ENCODE measurements at regions of chr6 and their contacts with region 1.

Region 1: DNA sequence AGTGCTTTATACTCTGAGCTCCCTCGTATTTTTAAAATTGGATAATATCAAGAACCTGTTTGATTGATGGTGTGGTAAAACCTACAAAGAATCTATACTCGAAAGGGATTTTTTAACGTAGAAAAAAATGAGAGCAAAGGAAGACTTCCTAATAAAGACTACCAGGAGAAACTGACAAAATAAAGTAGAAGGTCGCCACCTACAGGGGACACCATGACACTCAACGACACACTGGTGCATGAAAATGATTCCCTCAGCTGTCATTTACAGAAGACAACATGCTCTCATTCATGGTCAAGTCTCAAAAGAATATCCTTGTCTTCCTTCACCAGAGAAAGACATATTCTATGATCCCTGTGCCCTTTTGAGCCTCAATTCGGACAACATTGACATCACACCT is 10.1 kb upstream of the NHSL1 start:
- DNase-seq: peak; percentile 75
- ATAC-seq: peak; percentile 55
- H3K4me3 Mint-ChIP-seq: no peak overlapping the region
- H3K27ac Mint-ChIP-seq: no peak overlapping the region
- H3K4me1 Mint-ChIP-seq: no peaks in the 10 kb centered on the region
- H3K27me3 Mint-ChIP-seq: peaks cover 3% of the 10 kb centered on the region
- CTCF ChIP-seq: peak; percentile 63

Region 2: GRCh38 chr6:138250513-138251247 is 258.7 kb before region 1 on chr6:
- CTCF ChIA-PET with region 1: no interaction called
- POLR2A ChIA-PET with region 1: no interaction called
- intact Hi-C with region 1: no loop called
- DNase-seq: no peak
- ATAC-seq: no peak
- H3K4me3 Mint-ChIP-seq: no peak overlapping the region
- H3K27ac Mint-ChIP-seq: no peak overlapping the region
- H3K4me1 Mint-ChIP-seq: no peaks in the 10 kb centered on the region
- H3K27me3 Mint-ChIP-seq: peaks cover 6% of the 10 kb centered on the region
- CTCF ChIP-seq: no peak

Region 3: DNA sequence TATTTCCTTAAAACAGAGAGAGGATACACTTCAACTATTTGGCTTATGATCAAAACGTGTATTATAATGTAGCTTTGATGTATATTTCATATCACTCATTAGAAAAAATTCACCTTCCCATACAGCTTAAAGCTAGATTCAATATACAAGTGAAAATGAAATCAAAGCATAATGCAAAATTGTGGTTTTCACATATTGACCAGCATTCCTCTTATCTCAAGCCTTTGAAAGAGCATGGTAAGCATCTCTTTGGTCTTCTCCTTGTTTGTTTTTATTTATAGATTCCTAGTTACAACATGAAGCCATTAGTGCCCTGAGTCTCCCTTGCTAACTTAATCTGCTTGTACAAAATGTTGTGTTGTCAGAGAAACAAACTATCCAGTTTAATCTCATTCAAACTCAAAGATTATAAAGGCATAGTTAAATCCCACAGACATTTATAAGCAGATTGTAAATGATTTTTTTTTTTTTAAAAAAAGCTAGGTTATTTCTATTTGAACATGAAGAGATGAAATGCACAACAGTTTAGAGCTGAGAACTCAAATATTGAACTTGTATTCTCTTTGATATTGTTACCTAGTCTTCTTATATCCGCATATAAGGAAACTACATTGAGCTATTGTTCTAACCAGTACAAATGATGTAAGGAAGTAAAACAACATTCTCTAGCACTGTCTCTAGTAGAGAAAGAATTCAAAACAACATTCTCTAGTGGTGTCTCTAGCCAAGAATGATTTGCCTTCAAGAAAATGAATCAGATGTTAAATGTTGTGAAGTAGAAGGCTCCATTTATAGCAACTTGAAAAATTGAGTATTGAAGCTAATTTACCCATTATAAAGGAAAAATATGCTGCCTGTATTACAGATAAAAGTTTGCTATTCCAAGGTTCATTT is 162.8 kb before region 1 on chr6:
- CTCF ChIA-PET with region 1: no interaction called
- POLR2A ChIA-PET with region 1: no interaction called
- intact Hi-C with region 1: no loop called
- DNase-seq: no peak
- ATAC-seq: no peak
- H3K4me3 Mint-ChIP-seq: no peak overlapping the region
- H3K27ac Mint-ChIP-seq: no peak overlapping the region
- H3K4me1 Mint-ChIP-seq: no peaks in the 10 kb centered on the region
- H3K27me3 Mint-ChIP-seq: peaks cover 13% of the 10 kb centered on the region
- CTCF ChIP-seq: no peak

Region 4: GRCh38 chr6:138434925-138435324 is 74.4 kb before region 1 on chr6:
- CTCF ChIA-PET with region 1: interaction called, 131 read pairs
- POLR2A ChIA-PET with region 1: no interaction called
- intact Hi-C with region 1: no loop called
- DNase-seq: no peak
- ATAC-seq: no peak
- H3K4me3 Mint-ChIP-seq: no peak overlapping the region
- H3K27ac Mint-ChIP-seq: no peak overlapping the region
- H3K4me1 Mint-ChIP-seq: no peaks in the 10 kb centered on the region
- H3K27me3 Mint-ChIP-seq: no peaks in the 10 kb centered on the region
- CTCF ChIP-seq: no peak

Region 5: DNA sequence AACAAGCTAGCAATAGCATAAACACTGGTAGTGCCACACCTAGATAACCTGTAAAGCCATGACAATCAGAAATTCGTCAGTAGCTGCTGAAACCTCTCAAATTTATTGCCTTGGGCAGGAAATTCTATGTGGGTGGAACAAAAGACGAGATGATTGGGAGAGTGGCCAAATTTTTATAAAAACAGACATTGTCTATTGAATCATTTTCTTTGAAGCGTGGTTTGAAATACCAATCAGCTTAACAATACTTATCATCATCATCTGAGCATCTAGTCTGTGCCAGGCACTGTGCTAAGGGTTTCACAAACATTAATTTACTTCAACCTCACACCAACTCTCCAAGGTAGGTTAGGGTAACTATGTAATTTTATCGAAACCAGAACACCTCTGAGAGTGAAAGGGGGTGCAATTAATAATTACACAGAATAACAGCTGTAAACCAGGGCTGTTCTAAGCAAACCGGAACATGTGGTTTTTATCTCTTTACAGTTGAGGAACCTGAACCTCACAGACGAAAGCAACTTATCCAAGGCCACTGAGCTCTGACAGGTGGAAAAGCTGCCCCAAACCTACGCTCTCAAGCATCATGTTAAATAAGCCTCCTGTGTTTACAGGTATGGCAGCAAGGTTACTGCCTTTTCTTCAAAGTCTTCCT is 53.5 kb before region 1 on chr6:
- CTCF ChIA-PET with region 1: interaction called, 12 read pairs
- POLR2A ChIA-PET with region 1: no interaction called
- intact Hi-C with region 1: no loop called
- DNase-seq: peak; percentile 49
- ATAC-seq: peak; percentile 65
- H3K4me3 Mint-ChIP-seq: peak overlapping the region; percentile 32
- H3K27ac Mint-ChIP-seq: peak overlapping the region; percentile 82
- H3K4me1 Mint-ChIP-seq: peaks cover 23% of the 10 kb centered on the region
- H3K27me3 Mint-ChIP-seq: no peaks in the 10 kb centered on the region
- CTCF ChIP-seq: no peak

Region 6: DNA sequence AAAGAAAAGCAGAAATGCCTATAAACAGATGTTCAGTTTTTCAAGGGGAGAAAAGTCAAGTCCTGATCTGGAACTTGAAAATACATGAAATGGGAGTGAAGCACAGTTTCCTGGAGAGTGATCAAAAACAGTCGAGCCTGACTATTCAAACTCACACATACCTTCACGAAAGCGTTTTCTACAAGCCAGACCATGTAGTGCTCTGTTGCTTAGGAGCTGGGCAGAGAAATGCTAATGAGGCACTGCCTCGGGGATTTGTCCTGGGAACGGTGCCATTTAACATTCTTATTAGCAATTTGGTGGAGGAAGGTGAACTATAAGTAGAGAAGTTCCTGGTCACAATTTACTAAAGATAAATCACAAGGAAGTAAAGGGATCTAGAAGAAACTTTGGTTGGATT is 16.0 kb before region 1 on chr6:
- CTCF ChIA-PET with region 1: interaction called, 29 read pairs
- POLR2A ChIA-PET with region 1: no interaction called
- intact Hi-C with region 1: no loop called
- DNase-seq: no peak
- ATAC-seq: no peak
- H3K4me3 Mint-ChIP-seq: no peak overlapping the region
- H3K27ac Mint-ChIP-seq: no peak overlapping the region
- H3K4me1 Mint-ChIP-seq: no peaks in the 10 kb centered on the region
- H3K27me3 Mint-ChIP-seq: peaks cover 3% of the 10 kb centered on the region
- CTCF ChIP-seq: no peak

Region 7: GRCh38 chr6:138526822-138527235 is 17.5 kb after region 1 on chr6:
- CTCF ChIA-PET with region 1: interaction called, 12 read pairs
- POLR2A ChIA-PET with region 1: no interaction called
- intact Hi-C with region 1: no loop called
- DNase-seq: no peak
- ATAC-seq: no peak
- H3K4me3 Mint-ChIP-seq: no peak overlapping the region
- H3K27ac Mint-ChIP-seq: no peak overlapping the region
- H3K4me1 Mint-ChIP-seq: no peaks in the 10 kb centered on the region
- H3K27me3 Mint-ChIP-seq: peaks cover 3% of the 10 kb centered on the region
- CTCF ChIP-seq: no peak

Region 8: DNA sequence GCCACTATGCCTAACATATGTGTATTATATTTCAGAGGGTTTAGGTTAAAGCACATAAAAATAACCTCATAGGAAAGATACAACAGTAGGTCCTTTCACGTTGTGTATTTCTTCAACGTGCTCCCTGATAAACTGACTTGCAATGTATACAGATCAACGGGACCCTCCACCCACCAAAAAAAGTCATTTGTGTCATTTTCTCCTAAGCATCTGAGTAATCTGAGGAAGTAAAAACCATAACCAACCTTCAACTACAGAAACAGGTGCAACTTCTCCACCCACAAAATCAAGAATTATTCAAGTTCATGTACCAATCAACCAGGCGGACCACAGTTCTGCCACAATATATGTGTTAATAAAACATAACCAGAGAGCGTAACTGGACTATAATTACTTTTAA is 44.8 kb after region 1 on chr6:
- CTCF ChIA-PET with region 1: no interaction called
- POLR2A ChIA-PET with region 1: no interaction called
- intact Hi-C with region 1: no loop called
- DNase-seq: no peak
- ATAC-seq: no peak
- H3K4me3 Mint-ChIP-seq: no peak overlapping the region
- H3K27ac Mint-ChIP-seq: no peak overlapping the region
- H3K4me1 Mint-ChIP-seq: no peaks in the 10 kb centered on the region
- H3K27me3 Mint-ChIP-seq: no peaks in the 10 kb centered on the region
- CTCF ChIP-seq: no peak

Region 9: DNA sequence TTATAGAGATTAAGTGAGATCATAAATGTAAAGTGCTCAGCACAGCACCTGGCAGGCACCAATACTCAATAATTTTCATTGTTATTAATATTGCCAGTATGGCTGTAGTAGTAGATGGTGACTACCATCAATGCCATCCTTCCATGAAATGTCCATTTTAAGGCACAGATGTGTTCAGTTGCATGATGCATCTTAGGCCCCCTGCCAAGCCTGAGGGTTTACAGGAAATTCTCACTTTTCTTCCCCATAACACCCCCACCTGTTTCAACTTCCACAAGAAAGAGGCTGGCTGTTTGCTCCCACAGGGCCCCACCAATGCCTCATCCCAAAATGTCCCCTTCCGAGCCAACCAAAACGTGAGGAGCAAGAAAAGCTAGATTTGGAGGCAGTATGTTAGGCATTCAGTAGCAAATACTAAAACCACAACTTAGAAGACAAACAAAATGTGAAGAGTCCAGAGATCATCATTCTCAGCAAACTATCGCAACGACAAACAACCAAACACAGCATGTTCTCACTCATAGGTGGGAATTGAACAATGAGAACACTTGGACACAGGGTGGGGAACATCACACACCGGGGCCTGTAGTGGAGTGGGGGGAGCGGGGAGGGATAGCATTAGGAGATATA is 100.5 kb after region 1 on chr6:
- CTCF ChIA-PET with region 1: no interaction called
- POLR2A ChIA-PET with region 1: no interaction called
- intact Hi-C with region 1: no loop called
- DNase-seq: no peak
- ATAC-seq: no peak
- H3K4me3 Mint-ChIP-seq: no peak overlapping the region
- H3K27ac Mint-ChIP-seq: no peak overlapping the region
- H3K4me1 Mint-ChIP-seq: no peaks in the 10 kb centered on the region
- H3K27me3 Mint-ChIP-seq: peaks cover 10% of the 10 kb centered on the region
- CTCF ChIP-seq: no peak